ENCODE measurements at regions of chr15 and their contacts with region 1.

Region 1: DNA sequence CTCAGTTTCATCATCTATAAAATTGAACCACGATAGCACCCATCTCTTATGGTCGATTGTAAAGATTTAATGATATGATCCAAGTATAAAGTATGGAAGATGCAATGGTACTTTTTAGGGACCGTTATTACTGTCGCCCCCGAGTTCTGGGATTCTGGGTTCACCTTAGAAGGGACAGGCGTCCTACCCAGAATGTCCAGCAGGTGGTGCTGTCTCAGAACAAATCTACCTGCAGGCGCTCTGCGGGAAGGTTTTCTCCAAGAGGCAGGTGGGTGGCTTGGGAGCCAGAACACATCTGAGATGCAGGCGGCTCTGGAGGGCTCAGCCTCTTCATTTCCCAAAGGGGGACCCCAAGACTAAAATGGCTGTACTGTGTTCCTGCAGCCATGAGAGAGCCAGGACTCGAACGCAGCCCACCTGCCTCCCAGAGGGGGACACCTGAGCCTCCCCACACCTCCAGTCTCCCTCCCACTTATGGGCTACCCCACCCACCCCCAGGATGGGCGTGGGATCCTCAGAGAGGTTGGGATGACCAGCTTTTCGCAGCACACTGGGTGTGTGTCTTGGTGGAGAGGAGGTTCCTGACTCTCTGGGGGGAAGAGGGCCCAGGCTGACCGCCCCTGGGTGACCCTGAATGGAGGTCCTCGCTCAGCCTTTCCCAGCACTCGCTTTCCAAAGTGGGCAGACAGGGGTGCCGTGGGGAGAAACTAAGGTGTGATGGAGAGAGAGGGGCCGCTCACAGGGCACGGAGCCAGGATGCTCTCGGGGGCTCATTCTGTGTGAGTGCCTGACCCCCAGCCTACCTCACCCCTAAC is 28.1 kb upstream of the CORO2B start:
- DNase-seq: peak; percentile 60 to 72 (median 71)
- ATAC-seq: peak; percentile 87
- H3K4me3 ChIP-seq: no peak overlapping the region
- H3K27ac ChIP-seq: no peak overlapping the region
- H3K4me1 ChIP-seq: no peaks in the 10 kb centered on the region; a peak in 1 of 5 replicates
- H3K27me3 ChIP-seq: peaks cover 4 to 5% of the 10 kb centered on the region in 2 experiments; a peak in 1 of 5 replicates
- CTCF ChIP-seq: peak; percentile 83 to 87 (median 87)
- EP300 ChIP-seq: no peak
- POLR2A ChIP-seq: no peak
- RAD21 ChIP-seq: peak; percentile 68 to 79

Region 2: GRCh38 chr15:68672781-68673205 is 122.1 kb after region 1 on chr15:
- CTCF ChIA-PET with region 1: interaction called, 28 read pairs
- POLR2A ChIA-PET with region 1: no interaction called
- in situ Hi-C with region 1: loop called (anchors 5 kb)
- intact Hi-C with region 1: loop called (anchors 1 kb)
- DNase-seq: no peak
- ATAC-seq: peak; percentile 27; the same call in 1 of the 3 replicates
- H3K4me3 ChIP-seq: no peak overlapping the region
- H3K27ac ChIP-seq: no peak overlapping the region
- H3K4me1 ChIP-seq: no peaks in the 10 kb centered on the region
- H3K27me3 ChIP-seq: peaks cover 3 to 27% of the 10 kb centered on the region in 2 experiments; a peak in 3 of 5 replicates
- CTCF ChIP-seq: peak in 1 of 3 experiments; percentile 14; a peak in 1 of 6 replicates
- EP300 ChIP-seq: no peak
- POLR2A ChIP-seq: no peak
- RAD21 ChIP-seq: peak in 1 of 2 experiments; percentile 19; a peak in 2 of 4 replicates

Region 3: DNA sequence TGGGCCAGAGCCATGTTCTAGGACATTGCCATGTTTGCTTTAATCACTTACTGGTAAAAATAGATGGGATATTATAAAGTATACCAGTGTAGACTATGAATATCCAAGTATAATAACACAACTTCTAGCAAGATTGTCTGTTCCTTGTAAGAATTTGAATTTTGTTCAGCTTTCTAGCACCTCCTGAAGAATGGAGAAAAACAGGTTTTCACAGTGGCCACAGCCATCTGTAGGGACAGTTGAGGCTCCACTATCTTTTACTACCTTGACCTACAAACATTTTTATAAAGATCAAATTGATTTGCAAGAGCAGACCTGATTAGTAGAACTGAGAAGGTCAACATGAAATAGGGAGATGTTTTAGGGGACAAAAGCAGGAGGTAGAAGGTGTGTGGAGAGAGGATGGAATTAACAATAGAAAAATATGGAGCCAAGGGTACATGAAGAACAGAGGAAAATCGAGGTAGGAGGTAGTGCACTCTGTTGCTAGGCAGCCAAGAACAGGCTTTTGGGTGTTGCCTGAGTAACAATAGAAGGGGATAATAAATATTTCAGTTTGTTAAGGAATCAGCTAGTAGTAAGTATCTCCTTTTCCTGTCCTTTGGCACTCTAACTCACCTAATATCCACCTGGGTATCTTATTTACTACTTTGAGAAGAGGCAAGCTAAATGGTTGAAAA is 388.7 kb after region 1 on chr15:
- CTCF ChIA-PET with region 1: no interaction called
- POLR2A ChIA-PET with region 1: no interaction called
- in situ Hi-C with region 1: no loop called
- intact Hi-C with region 1: no loop called
- DNase-seq: no peak
- ATAC-seq: no peak
- H3K4me3 ChIP-seq: no peak overlapping the region
- H3K27ac ChIP-seq: no peak overlapping the region
- H3K4me1 ChIP-seq: no peaks in the 10 kb centered on the region
- H3K27me3 ChIP-seq: no peaks in the 10 kb centered on the region
- CTCF ChIP-seq: no peak
- EP300 ChIP-seq: no peak
- POLR2A ChIP-seq: no peak
- RAD21 ChIP-seq: no peak

Measured in K562 (cell line).